Posterior cingulate gyrus (tissue), 11 donors: ENCODE measurements at regions of chr6 and their contacts with region 1.

Region 1: GRCh38 chr6:149565527-149566409 is at the start of gene GINM1:
- DNase-seq: peak; percentile 89 to 99 (median 92)

Region 2: DNA sequence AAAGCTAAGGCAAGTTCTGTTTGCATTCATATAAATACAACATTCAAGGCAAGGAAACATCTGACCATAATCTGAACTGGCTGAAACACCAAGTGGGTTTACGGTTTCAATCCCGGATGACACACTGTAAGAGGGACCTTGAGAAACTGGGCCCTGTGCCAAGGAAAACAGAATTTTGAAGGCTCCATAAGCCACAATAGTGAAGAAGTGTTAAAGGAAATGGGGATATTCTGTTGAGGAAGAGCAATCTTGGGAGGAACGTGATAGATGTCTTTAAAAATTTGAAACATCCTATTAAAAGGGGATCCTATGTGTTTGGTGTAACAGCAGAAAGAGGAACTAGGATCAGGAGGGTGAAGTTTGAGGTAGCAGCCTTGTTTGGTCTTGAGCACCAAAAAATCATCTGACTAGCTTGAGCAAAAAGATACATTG is 330.6 kb before region 1 on chr6:
- intact Hi-C with region 1: no loop called
- DNase-seq: no peak

Region 3: GRCh38 chr6:149473080-149474052 is 92.4 kb before region 1 on chr6:
- intact Hi-C with region 1: no loop called
- DNase-seq: peak in 1 of 10 donors; percentile 83

Region 4: DNA sequence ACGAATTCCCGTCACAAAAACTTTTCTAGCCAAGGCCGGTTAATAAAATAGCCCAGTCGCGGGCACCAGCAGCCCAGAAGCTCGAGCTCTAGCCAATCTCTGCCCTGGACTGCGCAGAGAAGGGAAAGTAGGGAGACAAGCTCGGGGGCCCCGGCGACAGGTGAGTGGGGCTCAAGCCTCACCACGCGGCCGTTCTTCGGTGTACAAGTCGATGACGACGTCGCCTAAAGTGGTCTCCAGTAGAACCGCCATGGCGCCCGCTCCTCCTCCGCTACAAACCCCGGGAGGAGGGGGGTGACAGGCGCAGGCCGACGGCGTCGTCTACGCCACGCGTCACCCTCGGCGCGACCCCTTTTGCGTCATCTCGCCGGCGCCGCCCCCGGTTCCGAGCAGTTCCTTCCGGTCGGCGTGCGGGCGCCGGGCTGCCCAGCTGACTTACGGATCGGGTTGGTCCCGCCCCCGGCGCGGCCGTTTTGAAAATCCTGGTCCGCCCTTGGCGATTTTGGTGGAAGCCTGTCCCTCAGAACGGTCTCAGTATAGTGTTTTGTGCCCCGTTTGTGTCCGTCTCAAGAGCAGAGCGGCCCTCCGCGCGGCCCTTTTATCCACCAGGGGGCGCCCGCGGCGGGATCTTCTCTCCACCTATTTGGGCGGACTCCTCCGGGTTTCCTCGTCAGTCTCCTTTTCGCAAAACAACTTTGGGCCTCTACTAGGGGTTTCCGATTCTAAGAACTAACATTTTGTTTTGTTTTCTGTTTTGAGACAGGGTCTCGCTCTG is 19.8 kb before region 1 on chr6 and contains the start of gene PPIL4:
- intact Hi-C with region 1: loop called (anchors 2 kb)
- DNase-seq: peak; percentile 92 to 99 (median 95)

Region 5: GRCh38 chr6:149648148-149649145 is 82.7 kb after region 1 on chr6 and contains the start of gene KATNA1:
- intact Hi-C with region 1: loop called (anchors 5 kb)
- DNase-seq: peak; percentile 72 to 98 (median 84)

Region 6: DNA sequence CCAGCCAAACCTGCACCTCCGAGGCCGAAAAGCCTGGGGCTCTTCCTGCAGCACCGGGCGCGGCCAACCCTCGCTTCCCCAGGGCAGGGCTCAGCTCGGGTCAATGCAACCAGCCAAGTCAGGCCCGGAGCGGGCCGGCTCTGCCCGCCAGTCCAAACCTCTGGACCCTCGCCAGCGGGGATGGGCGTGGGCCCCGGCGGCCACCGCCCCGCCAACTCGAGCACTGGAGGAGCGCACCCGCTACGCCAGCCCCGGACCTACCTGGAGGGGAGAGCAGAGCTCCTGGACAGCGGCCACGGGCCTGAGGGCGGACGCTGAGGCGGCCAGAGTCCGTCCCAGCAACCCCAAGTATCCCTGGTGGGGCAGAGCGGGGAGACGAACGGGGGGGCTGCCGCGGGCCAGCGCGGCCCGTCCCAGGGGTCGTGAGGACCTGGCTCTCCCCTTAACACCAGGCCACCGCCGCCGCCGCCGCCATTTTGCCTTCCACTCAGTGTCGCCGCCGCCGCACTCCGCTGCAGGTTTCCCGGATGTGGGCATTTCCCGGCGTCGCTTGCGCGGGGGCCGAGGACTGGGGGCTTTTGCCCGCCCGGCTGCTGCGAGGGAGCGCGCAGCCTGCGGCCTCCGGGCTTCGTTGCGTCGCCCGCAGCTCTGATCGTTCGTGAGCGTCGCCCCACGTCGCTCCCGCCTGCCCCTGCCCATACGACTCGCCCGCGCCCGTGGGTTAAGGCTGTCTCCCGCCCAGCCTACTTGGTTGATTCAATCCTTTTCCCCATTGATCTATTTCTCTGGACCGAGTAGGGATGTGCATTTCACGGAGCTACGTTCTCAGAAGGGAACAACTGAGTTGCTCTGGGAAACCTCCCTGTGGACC is 152.1 kb after region 1 on chr6 and contains the start of gene LATS1:
- intact Hi-C with region 1: loop called (anchors 5 kb)
- DNase-seq: peak; percentile 87 to 98 (median 94)

Region 7: DNA sequence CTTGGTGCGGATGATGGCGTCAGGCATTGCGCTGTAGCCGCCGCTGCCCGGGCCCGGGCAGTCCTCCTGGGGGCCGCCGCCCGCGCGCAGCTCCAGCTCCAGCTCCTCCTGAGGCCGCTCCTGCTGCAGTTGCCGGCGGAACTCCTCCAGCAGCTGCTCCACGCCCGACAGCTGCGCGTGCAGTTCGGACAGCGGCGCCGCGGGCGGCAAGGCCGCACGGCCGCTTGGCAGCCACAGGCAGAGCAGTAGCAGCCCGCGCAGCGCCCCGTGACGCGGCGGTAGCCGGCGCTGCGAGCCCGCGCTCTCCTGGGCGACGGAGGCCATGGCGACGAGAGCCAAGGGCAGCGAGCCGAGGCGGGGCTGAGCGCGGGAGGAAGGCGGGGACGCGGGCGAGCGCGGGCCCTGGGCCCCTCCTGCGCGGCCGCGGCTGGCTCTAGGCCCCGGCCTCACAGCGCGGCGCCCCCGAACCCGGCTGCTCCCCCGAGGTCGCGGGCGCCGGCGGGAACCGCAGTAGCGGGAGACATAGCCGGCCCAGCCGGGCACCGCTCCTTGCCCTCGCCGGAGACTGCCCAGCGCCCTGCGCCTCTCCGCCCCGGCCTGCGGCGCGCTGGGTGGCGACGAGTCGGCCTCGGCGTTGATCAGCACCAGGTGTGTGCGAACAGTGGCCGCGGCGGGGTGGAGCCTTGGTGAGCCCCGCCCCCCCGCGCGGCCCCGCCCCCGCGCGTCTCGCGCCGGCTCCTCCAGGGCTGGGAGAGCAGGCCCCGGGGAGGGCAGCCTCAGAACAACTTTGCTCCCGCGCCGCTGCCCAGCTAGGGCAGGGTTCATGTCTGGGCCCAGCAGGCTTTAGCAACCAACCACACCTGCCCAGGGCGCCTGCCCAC is 298.2 kb after region 1 on chr6 and contains the start of gene LRP11:
- intact Hi-C with region 1: loop called (anchors 5 kb)
- DNase-seq: peak; percentile 71 to 98 (median 88)

Region 8: DNA sequence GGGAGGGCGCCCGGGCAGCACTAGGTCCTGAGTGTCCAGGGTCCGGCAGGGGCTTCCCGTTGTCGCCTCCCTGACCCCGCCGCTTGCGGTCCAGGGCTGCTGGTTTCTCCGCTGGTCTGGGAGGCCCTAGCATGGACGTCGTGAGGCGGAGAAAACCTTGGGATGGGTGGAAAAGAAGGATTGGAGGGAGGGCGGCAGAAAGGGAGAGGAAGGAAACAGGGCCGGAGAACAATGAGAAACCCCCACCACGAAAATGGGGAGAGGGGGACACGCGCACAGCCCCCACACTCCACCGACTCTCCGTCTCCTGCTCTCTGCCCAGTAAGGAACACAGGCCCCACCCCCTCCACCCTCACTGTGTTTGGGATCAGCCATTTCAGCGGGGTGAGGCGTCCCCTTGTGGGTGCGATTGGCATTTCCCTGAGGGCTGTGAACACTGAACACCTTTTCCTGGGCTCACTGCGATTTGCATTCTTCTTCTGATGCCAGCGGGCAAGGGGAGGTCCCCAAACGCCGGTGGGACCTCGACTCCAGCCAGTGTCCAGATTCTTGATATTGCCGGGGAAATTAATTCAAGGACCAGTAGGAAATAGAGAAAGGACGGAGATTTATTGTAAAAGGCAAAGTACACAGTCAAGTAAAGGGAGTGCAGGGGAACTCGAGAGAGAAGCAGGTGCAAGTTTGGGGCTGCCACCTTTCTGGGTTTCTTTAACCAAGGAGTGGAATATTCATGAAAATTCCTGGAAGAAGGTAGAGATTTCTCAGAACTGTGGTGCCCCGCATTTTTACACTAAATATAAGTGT is 360.4 kb after region 1 on chr6:
- intact Hi-C with region 1: loop called (anchors 5 kb)
- DNase-seq: peak; percentile 62 to 96 (median 78)